Transverse colon (tissue), 4 donors: ENCODE measurements at regions of chr10 and their contacts with region 1.

Region 1: GRCh38 chr10:50624866-50625692 is 1.3 kb upstream of the SGMS1 start:
- DNase-seq: peak; percentile 70
- H3K4me3 ChIP-seq: peak overlapping the region; percentile 72 to 96 (median 86)
- H3K27ac ChIP-seq: peak overlapping the region; percentile 99 to 100 (median 99)
- H3K4me1 ChIP-seq: peaks cover 10 to 21% (median 19%) of the 10 kb centered on the region in 4 donors
- H3K27me3 ChIP-seq: no peaks in the 10 kb centered on the region
- CTCF ChIP-seq: peak; percentile 43 to 79 (median 69)
- EP300 ChIP-seq: no peak
- POLR2A ChIP-seq: peak; percentile 19

Region 2: GRCh38 chr10:49538381-49539319 is 1086.4 kb before region 1 on chr10 and contains the start of gene ERCC6:
- in situ Hi-C with region 1: loop called in 1 of 4 experiments (anchors 25 kb)
- intact Hi-C with region 1: no loop called
- DNase-seq: peak; percentile 98
- H3K4me3 ChIP-seq: peak within 1 kb of the TSS; percentile 64 to 82 (median 72)
- H3K27ac ChIP-seq: peak within 1 kb of the TSS; percentile 85 to 94 (median 92)
- H3K4me1 ChIP-seq: peaks cover 7 to 24% (median 14%) of the 10 kb centered on the region in 4 donors
- H3K27me3 ChIP-seq: peaks cover 4% of the 10 kb centered on the region
- CTCF ChIP-seq: peak in 1 of 5 experiments; percentile 20
- EP300 ChIP-seq: no peak
- POLR2A ChIP-seq: peak; percentile 84
- total RNA-seq, gene ERCC6: 16.0 to 34.0 (median 22.4) TPM

Region 3: GRCh38 chr10:50417886-50418830 is 206.9 kb before region 1 on chr10:
- in situ Hi-C with region 1: loop called in 2 of 4 experiments (anchors 25 kb)
- intact Hi-C with region 1: loop called (anchors 5 kb)
- DNase-seq: peak; percentile 63
- H3K4me3 ChIP-seq: peak overlapping the region; percentile 47 to 79 (median 75)
- H3K27ac ChIP-seq: peak overlapping the region; percentile 72 to 87 (median 80)
- H3K4me1 ChIP-seq: peaks cover 0 to 24% (median 8%) of the 10 kb centered on the region in 4 donors
- H3K27me3 ChIP-seq: no peaks in the 10 kb centered on the region
- CTCF ChIP-seq: peak in 1 of 5 experiments; percentile 4
- EP300 ChIP-seq: no peak
- POLR2A ChIP-seq: no peak

Region 4: GRCh38 chr10:50554995-50555568 is 70.0 kb before region 1 on chr10:
- in situ Hi-C with region 1: no loop called
- intact Hi-C with region 1: loop called (anchors 5 kb)
- DNase-seq: no peak
- H3K4me3 ChIP-seq: no peak overlapping the region
- H3K27ac ChIP-seq: peak overlapping the region; percentile 7 to 44 (median 34)
- H3K4me1 ChIP-seq: peaks cover 6 to 42% (median 25%) of the 10 kb centered on the region in 4 donors
- H3K27me3 ChIP-seq: no peaks in the 10 kb centered on the region
- CTCF ChIP-seq: no peak
- EP300 ChIP-seq: no peak
- POLR2A ChIP-seq: no peak